Right ventricle myocardium inferior (tissue), 1 donor: ENCODE measurements at regions of chr5 and their contacts with region 1.

Region 1: GRCh38 chr5:57298295-57298984 is 124.6 kb downstream of the GPBP1 start:
- DNase-seq: no peak
- ATAC-seq: peak; percentile 89

Region 2: GRCh38 chr5:57435701-57436134 is 137.3 kb after region 1 on chr5:
- intact Hi-C with region 1: loop called (anchors 10 kb)
- DNase-seq: no peak
- ATAC-seq: no peak

Region 3: GRCh38 chr5:57499262-57500050 is 201.0 kb after region 1 on chr5:
- intact Hi-C with region 1: loop called (anchors 2 kb)
- DNase-seq: no peak
- ATAC-seq: peak; percentile 59

Region 4: GRCh38 chr5:57650360-57651069 is 352.1 kb after region 1 on chr5:
- intact Hi-C with region 1: loop called (anchors 10 kb)
- DNase-seq: no peak
- ATAC-seq: no peak

Region 5: DNA sequence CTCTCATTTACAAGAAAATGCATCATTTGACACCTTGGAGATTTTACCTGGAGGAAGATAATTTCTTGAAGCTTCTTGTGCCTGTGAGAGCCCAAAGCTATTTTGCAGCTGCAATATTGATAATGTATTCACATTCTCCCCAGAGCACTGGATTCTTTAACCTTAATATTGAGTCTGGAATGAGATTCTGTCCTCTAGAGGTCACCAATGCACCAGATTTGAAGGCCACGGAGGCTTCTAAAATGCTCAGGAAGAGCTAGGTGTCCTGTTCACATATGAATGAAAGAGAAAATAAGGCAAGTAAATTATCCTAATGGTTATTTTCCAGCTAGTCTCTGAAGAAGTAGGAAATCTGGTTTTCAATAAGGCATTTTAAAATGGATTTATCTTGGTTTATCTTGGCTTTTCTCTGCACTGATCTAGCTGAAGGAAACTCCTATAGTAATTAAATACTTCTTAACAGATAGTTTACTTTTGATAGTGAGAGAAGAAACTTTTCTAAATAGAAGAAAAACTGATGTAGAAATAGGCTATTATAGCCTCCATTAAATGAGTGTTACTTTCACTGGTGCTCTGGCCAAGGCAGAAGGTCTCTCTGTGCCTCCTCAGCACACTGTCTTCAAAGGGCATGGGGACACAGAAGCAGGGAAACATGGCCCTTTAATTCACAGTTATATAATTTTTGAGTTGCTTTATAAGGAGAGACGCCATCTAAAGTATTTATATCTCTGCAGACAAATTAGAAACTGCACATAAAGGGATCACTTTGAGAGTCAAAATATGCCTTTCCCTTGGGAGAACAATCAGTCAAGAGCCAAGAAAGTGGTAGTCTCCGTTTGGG is 481.2 kb after region 1 on chr5:
- intact Hi-C with region 1: loop called (anchors 2 kb)
- DNase-seq: no peak
- ATAC-seq: peak; percentile 79

Region 6: DNA sequence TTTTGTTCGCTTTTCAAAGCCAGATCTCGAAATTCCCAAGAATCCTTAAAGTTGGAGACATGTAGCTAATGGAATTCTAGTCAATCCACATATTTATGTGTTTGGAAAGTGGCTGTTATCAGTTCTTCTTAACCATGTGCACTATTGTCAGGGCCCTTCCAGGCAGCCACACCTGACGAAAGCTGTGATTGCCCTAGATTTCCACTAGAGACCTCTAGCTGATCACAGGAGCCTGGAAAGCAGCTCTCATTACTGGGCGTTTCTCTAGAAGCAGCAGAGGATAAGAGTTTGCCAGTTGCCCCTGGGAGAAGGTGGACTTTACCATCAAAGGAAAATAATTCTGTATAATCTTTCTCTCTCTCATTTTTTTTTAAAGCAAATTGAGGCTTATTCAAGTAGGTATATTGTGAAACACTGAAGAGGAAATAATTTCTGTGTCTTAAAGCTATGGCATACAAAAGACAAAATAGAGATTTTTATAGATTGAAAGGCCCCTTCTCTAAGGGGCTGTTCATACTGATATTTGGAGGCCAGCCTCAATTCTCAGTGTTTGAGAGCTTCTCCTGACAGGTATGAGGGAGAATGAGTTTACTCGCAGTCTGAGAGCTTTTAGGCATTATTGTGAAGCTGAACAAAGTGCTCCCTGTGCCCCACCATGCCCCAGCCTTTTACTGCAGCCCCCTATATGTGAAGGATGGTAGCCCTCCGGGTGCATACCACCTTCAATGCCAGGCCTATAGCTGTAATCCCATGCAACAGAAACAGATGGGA is 589.6 kb after region 1 on chr5:
- intact Hi-C with region 1: loop called (anchors 2 kb)
- DNase-seq: no peak
- ATAC-seq: peak; percentile 78